Head of caudate nucleus (tissue), 42 donors: ENCODE measurements at regions of chr22 and their contacts with region 1.

Region 1: DNA sequence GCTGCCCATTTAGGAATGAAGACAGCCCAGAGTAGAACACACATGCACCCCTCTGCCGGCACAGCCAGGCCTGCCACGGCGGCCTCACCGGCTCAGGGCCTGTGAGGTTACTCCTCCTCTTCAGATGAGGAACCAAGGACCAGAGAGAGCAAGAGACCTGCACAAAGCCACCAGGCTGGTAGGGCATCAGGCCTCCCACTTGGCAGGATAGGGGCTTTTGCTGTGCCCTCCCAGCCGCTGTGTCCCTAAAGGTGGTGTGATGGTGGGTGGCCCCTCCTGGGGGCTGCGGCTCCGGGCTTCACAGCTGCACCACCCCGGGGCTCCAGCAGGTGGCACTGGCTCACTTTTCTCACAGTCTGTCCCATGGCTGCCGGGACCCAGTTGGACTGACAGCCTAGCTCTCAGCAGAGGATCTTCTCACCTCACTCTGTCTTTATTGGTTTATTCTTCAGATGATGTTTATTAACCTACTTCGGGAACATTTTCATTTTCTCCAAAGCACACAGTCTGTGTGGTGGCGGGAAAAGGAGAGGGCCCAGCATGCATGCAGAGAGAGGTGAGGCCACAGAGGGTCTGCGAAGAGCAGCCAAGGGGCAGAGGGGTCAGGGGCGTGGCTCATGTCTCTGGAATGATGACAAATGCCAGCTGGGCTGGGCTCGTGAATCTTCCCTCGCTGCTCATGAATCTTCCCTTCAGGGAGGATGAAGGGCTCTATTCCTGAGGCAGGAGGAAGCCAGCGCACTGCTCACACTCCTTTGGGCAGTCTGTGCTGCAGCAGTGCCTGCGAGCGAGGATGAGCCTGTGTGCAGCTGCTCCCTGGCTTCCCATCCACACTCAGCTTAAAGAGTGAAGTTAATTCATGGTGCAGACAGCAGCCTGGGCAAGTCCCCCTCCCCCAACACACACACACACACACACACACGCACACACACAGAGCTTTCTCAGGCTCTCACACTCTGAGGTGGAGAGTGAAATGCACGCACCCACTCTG is 101.1 kb upstream of the PITPNB start:
- DNase-seq: peak; percentile 67 to 93 (median 84)

Region 2: DNA sequence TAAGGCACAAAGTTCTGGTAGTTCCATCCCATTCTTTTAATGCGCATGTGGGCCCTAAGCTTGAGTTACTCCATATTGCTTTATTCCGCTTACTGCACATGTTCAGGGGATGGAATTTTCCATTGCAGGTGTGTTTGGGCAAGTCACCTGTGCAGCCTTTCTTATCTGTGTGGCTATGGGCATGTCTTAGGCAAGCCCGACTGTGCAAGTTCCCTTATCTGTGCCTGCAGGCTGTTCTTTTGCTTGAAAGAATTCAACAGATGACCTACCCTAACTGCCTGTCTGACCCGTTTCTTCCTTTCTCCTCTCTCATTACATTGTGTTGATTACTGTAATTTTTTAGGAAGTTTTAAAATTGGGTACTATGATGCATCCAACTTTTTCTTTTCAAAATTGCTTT is 295.8 kb after region 1 on chr22:
- intact Hi-C with region 1: no loop called
- DNase-seq: no peak

Region 3: DNA sequence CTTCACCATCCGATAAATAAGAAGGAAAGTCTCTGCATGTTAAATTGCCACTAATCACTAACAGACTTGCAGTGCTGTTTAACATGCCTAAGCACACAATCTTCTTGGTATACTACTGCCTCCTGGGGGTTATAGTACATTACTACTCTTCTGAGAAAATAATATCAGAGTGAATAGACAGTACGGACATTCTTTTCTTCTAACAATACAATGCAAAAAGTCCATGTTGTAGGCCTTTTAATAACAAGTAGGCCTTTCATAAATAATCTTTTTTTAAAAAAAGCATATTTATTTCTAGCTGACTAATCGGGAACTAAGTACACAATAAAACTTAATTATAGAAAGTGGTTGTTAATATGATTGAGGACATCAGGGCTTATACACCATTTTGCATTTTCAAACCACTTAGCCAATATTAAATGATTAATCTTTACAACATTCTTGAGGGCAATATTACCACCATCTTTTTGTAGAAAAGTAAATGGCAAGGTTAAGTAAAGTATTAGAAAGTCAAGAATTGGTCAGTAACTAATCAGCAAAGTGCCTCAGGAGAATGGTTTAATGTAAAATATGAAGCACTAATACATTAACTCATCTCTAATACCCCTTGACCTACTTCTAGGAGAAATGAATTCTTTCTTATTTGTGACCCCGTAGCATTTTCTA is 574.8 kb after region 1 on chr22:
- intact Hi-C with region 1: loop called (anchors 10 kb)
- DNase-seq: peak in 4 of 42 donors; percentile 11 to 43 (median 18)